ENCODE measurements at regions of chr1 and their contacts with region 1.

Region 1: DNA sequence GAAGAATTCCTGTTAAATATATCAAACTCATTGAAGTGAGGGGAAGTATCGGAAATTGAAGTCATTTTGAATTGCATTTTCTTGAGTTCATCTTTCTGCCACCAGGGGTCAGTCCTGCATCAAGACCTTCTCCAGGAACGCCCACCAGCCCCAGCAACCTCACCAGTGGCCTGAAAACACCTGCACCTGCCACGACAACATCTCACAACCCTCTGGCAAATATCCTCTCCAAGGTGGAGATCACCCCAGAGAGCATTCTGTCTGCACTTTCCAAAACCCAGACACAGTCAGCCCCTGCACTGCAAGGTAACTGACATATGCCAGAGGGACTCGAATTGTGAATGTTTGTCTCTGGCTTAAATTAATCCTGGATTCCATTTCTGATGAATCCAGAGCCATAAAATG is 22.8 kb upstream of the TARS2 start:
- DNase-seq: peak; percentile 72
- H3K4me3 Mint-ChIP-seq: no peak overlapping the region
- H3K27ac Mint-ChIP-seq: no peak overlapping the region
- H3K4me1 Mint-ChIP-seq: no peaks in the 10 kb centered on the region
- H3K27me3 Mint-ChIP-seq: no peaks in the 10 kb centered on the region
- CTCF ChIP-seq: peak; percentile 80

Region 2: DNA sequence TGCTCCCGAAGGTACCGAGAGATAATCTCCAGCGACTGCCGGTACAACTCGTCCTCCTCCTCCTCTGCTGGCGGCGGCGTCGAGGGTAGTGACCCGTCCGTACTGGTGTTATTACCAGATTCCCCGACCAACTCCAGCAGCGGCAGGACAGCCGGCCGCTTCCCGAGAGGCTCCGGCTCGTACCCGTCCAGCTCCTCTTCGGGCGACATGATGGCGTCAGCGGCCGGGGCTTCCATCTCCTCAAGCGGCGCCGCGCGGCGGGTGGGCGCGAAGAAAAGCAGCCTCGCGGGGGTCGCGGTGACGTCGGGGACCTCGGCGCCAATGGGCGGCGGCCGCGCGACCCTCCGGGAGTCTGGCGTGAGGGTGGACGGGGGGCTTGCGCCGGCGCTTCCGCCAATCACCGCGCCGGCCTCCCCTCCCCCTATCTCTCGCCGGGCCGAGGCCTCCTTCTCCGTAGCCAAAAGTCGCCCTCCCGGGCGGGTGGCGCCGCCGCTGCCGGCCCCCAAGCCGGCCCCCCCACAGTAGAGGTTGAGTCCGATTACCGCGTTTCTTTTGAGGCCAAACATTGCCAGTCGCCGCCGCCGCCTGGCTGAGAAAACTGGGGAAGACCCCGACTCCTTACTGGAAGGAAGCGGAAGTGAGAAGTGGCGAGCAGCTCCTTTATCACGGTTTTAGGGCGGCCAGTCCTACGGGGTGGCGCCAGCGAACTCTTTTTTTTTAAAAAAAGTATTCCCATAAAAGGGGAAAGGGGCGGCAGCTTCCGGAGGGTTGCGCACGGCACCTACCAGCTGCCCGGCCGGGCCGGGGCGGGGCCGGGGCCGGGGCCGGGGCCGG is 114.8 kb after region 1 on chr1 and contains the start of gene MCL1:
- CTCF ChIA-PET with region 1: no interaction called
- POLR2A ChIA-PET with region 1: no interaction called
- intact Hi-C with region 1: no loop called
- DNase-seq: peak; percentile 98
- H3K4me3 Mint-ChIP-seq: peak within 1 kb of the TSS; percentile 99
- H3K27ac Mint-ChIP-seq: peak within 1 kb of the TSS; percentile 99
- H3K4me1 Mint-ChIP-seq: peaks cover 35% of the 10 kb centered on the region
- H3K27me3 Mint-ChIP-seq: no peaks in the 10 kb centered on the region
- CTCF ChIP-seq: no peak
- total RNA-seq, gene MCL1: 497 and 624 TPM in 2 replicates

Region 3: GRCh38 chr1:150979092-150980056 is 515.0 kb after region 1 on chr1:
- CTCF ChIA-PET with region 1: no interaction called
- POLR2A ChIA-PET with region 1: no interaction called
- intact Hi-C with region 1: loop called (anchors 5 kb)
- DNase-seq: peak; percentile 95
- H3K4me3 Mint-ChIP-seq: no peak overlapping the region
- H3K27ac Mint-ChIP-seq: no peak overlapping the region
- H3K4me1 Mint-ChIP-seq: peaks cover 32% of the 10 kb centered on the region
- H3K27me3 Mint-ChIP-seq: no peaks in the 10 kb centered on the region
- CTCF ChIP-seq: peak; percentile 100